Right lobe of liver (tissue), 6 donors: ENCODE measurements at regions of chr12 and their contacts with region 1.

Region 1: GRCh38 chr12:117377744-117378143 is 16.3 kb upstream of the NOS1 start:
- DNase-seq: no peak
- ATAC-seq: peak in 2 of 4 donors; percentile 42
- H3K4me3 ChIP-seq: no peak overlapping the region
- H3K27ac ChIP-seq: no peak overlapping the region
- H3K4me1 ChIP-seq: peaks cover 0 to 6% (median 0%) of the 10 kb centered on the region in 4 donors
- H3K27me3 ChIP-seq: no peaks in the 10 kb centered on the region
- CTCF ChIP-seq: no peak
- POLR2A ChIP-seq: no peak

Region 2: GRCh38 chr12:117243488-117243887 is 134.3 kb before region 1 on chr12:
- intact Hi-C with region 1: no loop called
- DNase-seq: no peak
- ATAC-seq: no peak
- H3K4me3 ChIP-seq: no peak overlapping the region
- H3K27ac ChIP-seq: no peak overlapping the region
- H3K4me1 ChIP-seq: no peaks in the 10 kb centered on the region
- H3K27me3 ChIP-seq: no peaks in the 10 kb centered on the region
- CTCF ChIP-seq: no peak
- POLR2A ChIP-seq: no peak

Region 3: DNA sequence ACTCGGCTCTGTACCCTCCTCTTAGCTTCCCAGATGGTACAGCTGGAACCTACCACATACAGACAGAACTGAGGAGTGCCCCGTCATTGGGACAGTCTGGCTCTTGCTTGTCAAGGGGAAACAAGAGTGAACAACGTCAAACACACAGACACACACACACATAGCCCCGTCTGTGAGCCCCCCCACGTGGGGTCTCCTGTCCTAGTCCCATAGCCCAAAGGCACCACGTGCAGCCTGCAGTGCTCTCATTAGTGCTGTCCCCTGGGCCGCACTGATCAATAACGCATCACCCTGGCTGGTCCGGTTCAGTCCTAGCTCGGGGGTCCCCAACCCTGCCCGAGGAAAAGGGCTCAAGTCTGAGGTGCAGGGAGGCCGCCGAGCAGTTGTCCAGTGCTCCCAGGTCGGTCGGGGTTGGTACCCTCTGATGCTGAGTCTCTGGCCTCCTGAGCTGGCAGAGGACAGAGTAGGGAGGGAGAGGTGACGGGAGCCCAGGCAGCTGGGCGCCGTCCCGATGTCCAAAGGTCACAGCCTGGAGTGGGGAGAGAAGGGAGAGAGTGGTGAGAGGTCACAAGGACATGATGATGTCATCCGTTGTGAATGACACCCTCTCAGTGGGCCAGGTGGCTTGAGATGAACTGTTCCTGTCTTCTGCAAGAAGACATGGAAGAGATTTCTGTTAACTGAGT is 89.1 kb after region 1 on chr12:
- intact Hi-C with region 1: loop called in 1 of 2 experiments (anchors 10 kb)
- DNase-seq: peak; percentile 87 to 94 (median 94)
- ATAC-seq: peak; percentile 99 to 100 (median 99)
- H3K4me3 ChIP-seq: no peak overlapping the region
- H3K27ac ChIP-seq: no peak overlapping the region
- H3K4me1 ChIP-seq: peaks cover 0 to 4% (median 2%) of the 10 kb centered on the region in 4 donors
- H3K27me3 ChIP-seq: no peaks in the 10 kb centered on the region
- CTCF ChIP-seq: no peak
- POLR2A ChIP-seq: no peak

Region 4: GRCh38 chr12:117590999-117591398 is 213.3 kb after region 1 on chr12:
- intact Hi-C with region 1: loop called in 1 of 2 experiments (anchors 5 kb)
- DNase-seq: no peak
- ATAC-seq: no peak
- H3K4me3 ChIP-seq: no peak overlapping the region
- H3K27ac ChIP-seq: no peak overlapping the region
- H3K4me1 ChIP-seq: no peaks in the 10 kb centered on the region
- H3K27me3 ChIP-seq: no peaks in the 10 kb centered on the region
- CTCF ChIP-seq: no peak
- POLR2A ChIP-seq: no peak